Adrenal gland (tissue), 19 donors: ENCODE measurements at regions of chr11 and their contacts with region 1.

Region 1: DNA sequence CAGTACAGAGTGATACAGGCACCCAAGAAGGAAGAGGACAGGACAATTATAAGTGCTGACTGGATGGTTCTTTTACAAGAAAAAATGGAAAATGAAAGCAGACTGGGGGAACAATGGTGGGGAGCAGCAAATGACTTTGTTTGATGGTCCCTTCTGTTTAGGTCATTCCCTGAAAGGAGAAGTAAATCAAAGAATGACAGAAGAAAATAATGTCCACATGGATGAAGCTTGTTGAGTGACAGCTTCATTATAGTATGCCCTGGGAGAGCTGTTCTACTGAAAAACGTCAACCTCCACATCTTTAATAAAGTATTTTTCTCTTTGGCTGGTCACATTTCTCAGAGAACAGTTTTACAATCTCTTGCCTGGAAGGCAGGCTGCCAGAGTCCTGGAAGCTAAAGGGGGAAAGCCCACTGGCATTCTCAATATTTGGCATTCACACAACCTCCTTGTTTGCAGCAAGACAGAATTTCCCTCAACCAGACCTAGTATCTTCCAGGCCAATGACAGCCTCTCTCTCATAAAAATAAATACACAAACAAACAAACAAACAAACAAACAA is 287.9 kb downstream of the SWAP70 start:
- DNase-seq: no peak
- H3K4me3 ChIP-seq: no peak overlapping the region
- H3K27ac ChIP-seq: no peak overlapping the region
- H3K4me1 ChIP-seq: no peaks in the 10 kb centered on the region
- H3K27me3 ChIP-seq: no peaks in the 10 kb centered on the region
- CTCF ChIP-seq: no peak
- POLR2A ChIP-seq: no peak

Region 2: DNA sequence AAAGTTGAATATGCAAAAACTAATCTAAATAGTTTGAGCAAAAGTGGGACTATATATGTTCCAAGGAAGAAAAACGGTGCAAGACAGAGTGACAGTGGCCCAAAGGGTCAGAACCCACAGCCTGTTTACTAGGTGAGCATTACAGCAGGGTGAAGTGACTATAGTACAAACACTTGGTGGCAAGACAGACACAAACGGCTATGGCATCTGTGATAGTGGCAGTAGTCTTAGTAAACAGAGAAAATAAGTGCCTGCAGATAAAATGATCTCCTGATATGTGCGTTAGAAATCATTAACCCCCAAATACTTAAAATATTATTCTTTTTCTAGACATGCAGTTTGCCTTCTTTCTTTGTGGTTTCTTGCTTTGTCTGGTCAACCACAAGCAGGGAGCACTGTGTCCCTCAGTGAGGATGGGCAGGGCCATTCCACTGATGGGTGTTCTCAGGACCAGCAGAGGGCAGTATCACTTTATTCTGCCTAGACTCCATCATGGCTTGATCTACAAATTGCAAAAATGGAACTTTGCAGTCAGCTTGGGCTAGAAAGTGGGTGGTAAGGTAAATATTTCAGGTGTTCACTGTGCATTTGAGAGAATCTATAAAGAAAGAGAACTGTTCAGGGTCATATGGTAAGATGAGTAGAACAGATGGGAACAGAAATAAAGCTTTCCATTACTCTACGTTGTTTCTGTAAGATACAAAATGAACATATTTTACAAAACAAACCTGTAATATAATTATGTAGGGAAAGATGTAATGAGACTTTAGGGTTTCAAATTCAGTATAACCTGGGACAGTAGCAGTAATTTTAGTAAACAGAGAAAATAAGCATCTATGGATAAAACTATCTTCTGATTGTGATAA is 89.7 kb before region 1 on chr11:
- intact Hi-C with region 1: no loop called
- DNase-seq: peak; percentile 39 to 81 (median 52)
- H3K4me3 ChIP-seq: no peak overlapping the region
- H3K27ac ChIP-seq: no peak overlapping the region
- H3K4me1 ChIP-seq: peaks cover 0 to 18% of the 10 kb centered on the region in 2 donors
- H3K27me3 ChIP-seq: no peaks in the 10 kb centered on the region
- CTCF ChIP-seq: peak; percentile 43 to 75 (median 66)
- POLR2A ChIP-seq: no peak

Region 3: DNA sequence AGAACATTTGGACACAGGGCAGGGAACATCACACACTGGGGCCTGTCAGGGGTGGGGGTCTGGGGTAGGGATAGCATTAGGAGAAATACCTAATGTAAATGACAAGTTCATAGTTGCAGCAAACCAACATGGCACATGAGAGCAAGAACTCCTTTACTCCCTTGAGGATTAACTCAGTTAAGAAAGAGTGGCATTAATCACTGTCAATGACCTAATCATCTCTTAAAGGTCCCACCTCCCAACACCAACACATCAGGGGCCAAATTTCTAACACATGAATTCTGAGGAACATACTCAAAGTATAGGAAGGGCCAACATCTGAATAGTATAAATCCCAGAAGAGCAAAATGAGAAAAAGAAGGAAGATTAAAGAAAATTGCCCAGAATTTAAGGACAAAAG is 15.0 kb before region 1 on chr11:
- intact Hi-C with region 1: loop called in 1 of 2 experiments (anchors 2 kb)
- DNase-seq: no peak
- H3K4me3 ChIP-seq: no peak overlapping the region
- H3K27ac ChIP-seq: no peak overlapping the region
- H3K4me1 ChIP-seq: no peaks in the 10 kb centered on the region
- H3K27me3 ChIP-seq: no peaks in the 10 kb centered on the region
- CTCF ChIP-seq: no peak
- POLR2A ChIP-seq: no peak